AG04450 (cell line): ENCODE measurements at regions of chr17 and their contacts with region 1.

Region 1: GRCh38 chr17:32755045-32755805 is 121.7 kb downstream of the MYO1D start:
- DNase-seq: peak; percentile 18
- H3K4me3 ChIP-seq: no peak overlapping the region
- H3K27ac ChIP-seq: no peak overlapping the region
- H3K27me3 ChIP-seq: no peaks in the 10 kb centered on the region
- CTCF ChIP-seq: peak; percentile 36

Region 2: GRCh38 chr17:32659419-32659842 is 95.8 kb before region 1 on chr17:
- CTCF ChIA-PET with region 1: interaction called, 15 read pairs
- POLR2A ChIA-PET with region 1: no interaction called
- DNase-seq: no peak
- H3K4me3 ChIP-seq: no peak overlapping the region
- H3K27ac ChIP-seq: no peak overlapping the region
- H3K27me3 ChIP-seq: no peaks in the 10 kb centered on the region
- CTCF ChIP-seq: peak; percentile 96